Mammary epithelial cell (primary cell): ENCODE measurements at regions of chr18 and their contacts with region 1.

Region 1: GRCh38 chr18:77132371-77133050 is at the start of gene MBP:
- DNase-seq: peak; percentile 71
- H3K4me3 ChIP-seq: peak within 1 kb of the TSS; percentile 74 to 88 (median 76)
- H3K27ac ChIP-seq: peak within 1 kb of the TSS; percentile 95
- H3K4me1 ChIP-seq: peaks cover 36% of the 10 kb centered on the region
- H3K27me3 ChIP-seq: no peaks in the 10 kb centered on the region
- CTCF ChIP-seq: no peak
- total RNA-seq, gene MBP: 30.7 to 43.3 TPM

Region 2: GRCh38 chr18:77054606-77055428 is 77.7 kb before region 1 on chr18:
- CTCF ChIA-PET with region 1: no interaction called
- dilution Hi-C with region 1: no loop called
- in situ Hi-C with region 1: loop called in 1 of 2 experiments (anchors 10 kb)
- intact Hi-C with region 1: loop called (anchors 2 kb)
- DNase-seq: no peak
- H3K4me3 ChIP-seq: no peak overlapping the region
- H3K27ac ChIP-seq: no peak overlapping the region
- H3K4me1 ChIP-seq: no peaks in the 10 kb centered on the region
- H3K27me3 ChIP-seq: no peaks in the 10 kb centered on the region
- CTCF ChIP-seq: peak; percentile 23 to 54

Region 3: GRCh38 chr18:77087393-77088141 is 44.9 kb before region 1 on chr18:
- CTCF ChIA-PET with region 1: no interaction called
- dilution Hi-C with region 1: no loop called
- in situ Hi-C with region 1: no loop called
- intact Hi-C with region 1: loop called (anchors 1 kb)
- DNase-seq: no peak
- H3K4me3 ChIP-seq: peak overlapping the region in 1 of 3 experiments; percentile 17
- H3K27ac ChIP-seq: peak overlapping the region; percentile 44
- H3K4me1 ChIP-seq: peaks cover 50% of the 10 kb centered on the region
- H3K27me3 ChIP-seq: no peaks in the 10 kb centered on the region
- CTCF ChIP-seq: no peak

Region 4: DNA sequence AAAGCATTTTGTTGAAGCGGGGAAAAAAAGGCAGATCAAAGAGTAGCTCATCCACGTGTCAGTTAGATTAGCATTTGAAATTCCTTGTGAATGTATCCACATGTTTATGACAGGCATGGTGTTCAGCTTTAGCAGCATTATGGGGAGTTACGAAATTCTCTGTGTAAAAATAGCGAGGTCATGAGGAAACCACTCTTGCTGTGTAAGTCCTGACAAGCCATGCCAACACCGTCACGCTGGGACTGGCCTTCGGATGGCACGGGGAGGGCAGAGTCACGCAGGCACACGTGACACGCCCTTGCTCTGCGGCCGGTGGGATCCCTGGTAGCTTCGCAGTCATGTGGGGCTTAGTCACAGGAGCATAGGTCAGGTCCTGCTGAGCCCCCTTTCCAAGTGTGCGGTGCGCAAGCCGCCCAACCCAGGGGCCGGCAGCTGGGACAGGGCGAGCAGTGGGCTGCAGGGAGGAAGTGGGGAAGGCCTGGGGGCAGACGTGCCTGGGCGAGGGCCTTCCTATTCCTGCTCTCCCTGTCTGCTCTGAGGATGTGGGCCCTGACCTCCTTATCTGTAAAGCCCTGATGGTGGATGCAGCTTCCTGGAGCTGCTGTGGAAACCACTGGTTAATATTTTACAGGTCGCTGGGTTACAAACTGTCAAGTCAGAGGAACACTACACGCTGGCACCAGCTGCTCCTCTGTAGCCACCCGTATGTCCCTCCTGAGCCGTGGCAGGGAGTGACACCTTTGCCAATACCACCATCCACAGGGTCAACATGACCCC is 17.9 kb before region 1 on chr18:
- CTCF ChIA-PET with region 1: no interaction called
- dilution Hi-C with region 1: no loop called
- in situ Hi-C with region 1: no loop called
- intact Hi-C with region 1: loop called (anchors 1 kb)
- DNase-seq: peak; percentile 99
- H3K4me3 ChIP-seq: no peak overlapping the region
- H3K27ac ChIP-seq: peak overlapping the region; percentile 87
- H3K4me1 ChIP-seq: peaks cover 37% of the 10 kb centered on the region
- H3K27me3 ChIP-seq: no peaks in the 10 kb centered on the region
- CTCF ChIP-seq: no peak